HCT116 (cell line): ENCODE measurements at regions of chr4 and their contacts with region 1.

Region 1: DNA sequence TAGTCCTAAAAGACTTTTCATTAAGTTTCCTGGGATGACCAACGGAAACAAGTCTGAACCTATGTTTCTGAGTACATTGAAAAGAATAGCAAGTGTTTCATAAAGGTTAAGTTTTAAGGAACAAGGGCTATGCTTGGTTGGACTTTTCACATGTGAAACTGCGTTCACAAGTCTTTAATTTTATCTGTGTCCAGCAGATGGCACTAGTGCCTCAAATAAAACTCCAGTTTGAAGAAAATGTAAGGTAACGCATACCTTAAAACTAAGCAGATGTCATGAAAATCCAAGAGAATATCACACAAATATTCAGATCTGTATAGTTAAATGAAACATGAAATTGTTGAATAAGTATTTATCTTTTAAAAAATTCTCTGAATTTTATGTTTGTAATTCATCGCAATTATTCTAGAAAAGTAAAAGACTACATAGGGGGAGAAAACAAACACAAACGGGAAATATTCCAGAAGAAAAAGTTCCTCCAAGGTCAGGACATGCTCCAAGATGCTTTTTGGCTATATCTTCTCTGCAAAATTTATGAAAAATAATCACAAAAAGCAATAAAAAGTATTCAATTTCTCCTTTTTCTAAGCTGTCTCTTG is 89.6 kb upstream of the MAD2L1 start:
- DNase-seq: peak; percentile 83
- ATAC-seq: peak; percentile 81
- H3K4me3 ChIP-seq: no peak overlapping the region
- H3K27ac ChIP-seq: no peak overlapping the region
- H3K4me1 ChIP-seq: no peaks in the 10 kb centered on the region
- H3K27me3 ChIP-seq: no peaks in the 10 kb centered on the region
- CTCF ChIP-seq: peak; percentile 27 to 74 (median 60); a peak in 4 of 6 replicates
- POLR2A ChIP-seq: no peak
- RAD21 ChIP-seq: peak; percentile 79

Region 2: DNA sequence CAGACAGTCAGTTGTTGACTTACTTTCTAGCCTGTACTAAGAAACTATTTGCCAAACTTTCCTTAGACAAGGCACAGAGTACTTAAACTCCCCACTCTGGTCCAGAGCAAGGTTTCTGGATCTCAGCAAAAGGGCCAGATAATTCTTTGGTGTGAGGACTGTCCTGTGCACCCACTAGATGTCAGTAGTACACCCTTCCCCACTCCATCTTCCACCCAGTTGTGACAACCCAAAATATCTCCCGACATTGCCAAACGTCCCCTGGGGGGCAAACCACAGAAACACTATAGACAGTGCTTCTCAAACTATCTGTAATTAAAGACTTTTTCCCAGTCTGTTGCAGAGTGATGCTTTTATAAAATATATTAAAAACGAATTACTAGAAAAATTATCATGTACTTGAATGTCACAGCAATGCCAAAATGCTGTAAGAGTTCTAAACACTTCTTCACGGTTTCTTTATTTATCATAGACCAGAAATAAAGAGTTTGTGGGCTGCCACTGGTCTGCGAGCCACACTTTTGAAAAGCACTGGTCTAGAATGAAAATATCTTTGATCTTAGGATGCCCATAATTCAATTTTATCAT is 562.9 kb after region 1 on chr4:
- CTCF ChIA-PET with region 1: no interaction called
- POLR2A ChIA-PET with region 1: no interaction called
- RAD21 ChIA-PET with region 1: no interaction called
- intact Hi-C with region 1: loop called (anchors 2 kb)
- DNase-seq: peak; percentile 16
- ATAC-seq: peak; percentile 97
- H3K4me3 ChIP-seq: no peak overlapping the region
- H3K27ac ChIP-seq: no peak overlapping the region
- H3K4me1 ChIP-seq: no peaks in the 10 kb centered on the region
- H3K27me3 ChIP-seq: no peaks in the 10 kb centered on the region
- CTCF ChIP-seq: peak; percentile 53 to 73 (median 71); a peak in 5 of 6 replicates
- POLR2A ChIP-seq: no peak
- RAD21 ChIP-seq: peak; percentile 67

Region 3: DNA sequence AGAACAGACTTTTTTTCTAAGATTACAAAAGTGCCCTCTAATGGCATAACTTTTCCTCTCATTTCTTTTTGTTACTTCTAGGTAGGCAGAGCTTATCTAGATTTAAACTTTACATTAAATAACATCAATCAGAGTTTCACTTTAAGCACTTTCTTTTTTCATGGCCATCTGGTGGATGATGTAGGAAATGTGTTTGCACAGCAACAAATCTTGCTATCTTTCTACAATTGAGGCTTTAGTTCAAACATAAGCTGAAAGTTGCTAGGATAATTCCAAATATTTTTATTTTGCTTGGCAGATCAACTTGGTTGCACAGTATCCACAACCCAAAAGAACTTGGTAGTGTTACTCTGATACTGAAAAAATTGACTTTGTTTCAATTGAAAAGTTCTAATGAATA is 894.1 kb after region 1 on chr4:
- CTCF ChIA-PET with region 1: no interaction called
- POLR2A ChIA-PET with region 1: no interaction called
- RAD21 ChIA-PET with region 1: no interaction called
- intact Hi-C with region 1: loop called (anchors 1 kb)
- DNase-seq: no peak
- ATAC-seq: no peak
- H3K4me3 ChIP-seq: no peak overlapping the region
- H3K27ac ChIP-seq: no peak overlapping the region
- H3K4me1 ChIP-seq: peaks cover 0 to 5% of the 10 kb centered on the region in 2 experiments; a peak in 1 of 4 replicates
- H3K27me3 ChIP-seq: no peaks in the 10 kb centered on the region
- CTCF ChIP-seq: peak; percentile 22 to 51 (median 29); a peak in 5 of 6 replicates
- POLR2A ChIP-seq: no peak
- RAD21 ChIP-seq: 0 out of 2 replicates have a peak, but pooled peaks have one; percentile 20

Region 4: GRCh38 chr4:121096629-121097028 is 940.4 kb after region 1 on chr4:
- CTCF ChIA-PET with region 1: interaction called, 7 read pairs
- POLR2A ChIA-PET with region 1: no interaction called
- RAD21 ChIA-PET with region 1: no interaction called
- intact Hi-C with region 1: loop called (anchors 1 kb)
- DNase-seq: peak; percentile 24
- ATAC-seq: no peak
- H3K4me3 ChIP-seq: no peak overlapping the region
- H3K27ac ChIP-seq: no peak overlapping the region
- H3K4me1 ChIP-seq: no peaks in the 10 kb centered on the region
- H3K27me3 ChIP-seq: no peaks in the 10 kb centered on the region
- CTCF ChIP-seq: peak; percentile 21 to 59 (median 57); a peak in 4 of 6 replicates
- POLR2A ChIP-seq: no peak
- RAD21 ChIP-seq: peak; percentile 80

Region 5: DNA sequence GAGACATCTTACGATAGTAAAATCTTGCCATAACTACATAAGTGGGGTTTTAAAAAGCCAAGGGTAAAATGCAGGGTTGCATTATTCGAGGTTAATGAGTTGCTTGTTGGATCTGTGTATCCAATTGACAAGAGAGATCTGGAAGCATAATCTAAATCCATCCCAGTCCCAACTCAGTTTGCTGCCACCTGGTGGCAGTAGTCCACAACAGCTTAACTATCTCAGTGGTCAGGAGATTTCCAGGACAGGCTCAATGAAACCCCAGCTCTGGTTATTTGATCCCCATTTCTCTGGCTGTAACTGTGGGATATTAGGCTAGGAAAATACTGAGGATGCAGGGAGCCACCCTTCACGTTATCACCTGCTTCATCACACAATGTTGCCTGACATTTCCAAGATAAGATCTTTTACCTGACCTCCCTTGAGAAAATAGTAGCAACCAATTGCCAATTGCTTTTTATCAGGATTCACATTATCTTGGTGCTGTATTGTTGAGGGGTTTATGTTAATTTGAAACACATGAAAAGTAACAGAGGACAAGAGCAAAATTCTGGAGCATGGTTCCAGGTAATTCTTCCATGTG is 1096.1 kb after region 1 on chr4:
- CTCF ChIA-PET with region 1: no interaction called
- POLR2A ChIA-PET with region 1: no interaction called
- RAD21 ChIA-PET with region 1: no interaction called
- intact Hi-C with region 1: loop called (anchors 5 kb)
- DNase-seq: peak; percentile 48
- ATAC-seq: peak; percentile 96
- H3K4me3 ChIP-seq: no peak overlapping the region
- H3K27ac ChIP-seq: no peak overlapping the region
- H3K4me1 ChIP-seq: peaks cover 3 to 9% of the 10 kb centered on the region in 2 experiments; a peak in 3 of 4 replicates
- H3K27me3 ChIP-seq: no peaks in the 10 kb centered on the region
- CTCF ChIP-seq: peak; percentile 59 to 86 (median 81); a peak in 5 of 6 replicates
- POLR2A ChIP-seq: no peak
- RAD21 ChIP-seq: peak; percentile 67

Region 6: DNA sequence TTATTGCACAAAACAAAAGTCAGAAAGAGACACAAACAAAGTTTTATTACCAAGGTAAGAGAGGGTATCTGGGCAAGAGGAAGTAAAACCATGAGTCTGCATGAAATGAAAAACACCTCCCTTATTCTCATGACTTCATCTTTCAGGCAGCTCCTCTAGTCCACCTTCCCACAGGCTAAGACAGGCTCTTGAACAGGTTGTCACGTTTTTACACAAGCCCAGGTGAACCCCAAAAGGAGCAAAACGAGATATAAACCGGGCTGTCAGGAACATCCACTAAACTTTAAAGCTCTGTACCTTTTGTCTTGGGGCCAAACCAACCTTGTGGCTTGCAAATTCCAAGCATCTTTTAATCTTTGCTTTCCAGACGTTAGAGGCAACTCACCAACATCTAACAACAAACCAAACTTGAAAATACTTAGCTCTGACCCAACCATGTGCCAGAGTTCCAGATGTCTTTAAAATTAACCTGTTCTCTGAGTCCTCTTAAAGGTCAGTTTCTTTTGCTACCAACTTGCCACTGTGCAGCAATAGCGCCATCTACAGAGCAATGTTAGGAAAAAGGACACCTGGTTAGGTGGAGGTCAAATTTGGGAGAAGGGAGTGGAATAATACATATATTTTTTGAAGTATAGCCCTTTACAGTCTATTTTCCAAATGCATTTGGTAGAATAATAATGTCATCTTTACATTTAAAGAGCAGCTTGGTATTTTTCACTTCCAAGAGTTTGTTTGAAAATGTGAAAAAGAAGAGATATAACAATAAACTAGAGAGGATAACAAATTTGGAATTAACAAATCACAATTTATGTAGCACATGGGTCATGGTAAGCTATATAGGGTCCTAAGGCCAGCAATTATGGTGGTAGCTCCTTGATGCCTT is 1151.5 kb after region 1 on chr4:
- CTCF ChIA-PET with region 1: no interaction called
- POLR2A ChIA-PET with region 1: no interaction called
- RAD21 ChIA-PET with region 1: no interaction called
- intact Hi-C with region 1: loop called (anchors 5 kb)
- DNase-seq: peak; percentile 63
- ATAC-seq: peak; percentile 91
- H3K4me3 ChIP-seq: no peak overlapping the region
- H3K27ac ChIP-seq: no peak overlapping the region
- H3K4me1 ChIP-seq: peaks cover 0 to 4% of the 10 kb centered on the region in 2 experiments; a peak in 1 of 4 replicates
- H3K27me3 ChIP-seq: no peaks in the 10 kb centered on the region
- CTCF ChIP-seq: peak; percentile 76 to 93 (median 84)
- POLR2A ChIP-seq: no peak
- RAD21 ChIP-seq: peak; percentile 89

Region 7: GRCh38 chr4:121656269-121656641 is 1500.0 kb after region 1 on chr4:
- CTCF ChIA-PET with region 1: no interaction called
- POLR2A ChIA-PET with region 1: no interaction called
- RAD21 ChIA-PET with region 1: no interaction called
- intact Hi-C with region 1: loop called (anchors 10 kb)
- DNase-seq: peak; percentile 65
- ATAC-seq: peak; percentile 81
- H3K4me3 ChIP-seq: no peak overlapping the region
- H3K27ac ChIP-seq: no peak overlapping the region
- H3K4me1 ChIP-seq: no peaks in the 10 kb centered on the region
- H3K27me3 ChIP-seq: no peaks in the 10 kb centered on the region
- CTCF ChIP-seq: peak; percentile 50 to 64 (median 51); a peak in 5 of 6 replicates
- POLR2A ChIP-seq: no peak
- RAD21 ChIP-seq: peak; percentile 77